AG04449 (cell line): ENCODE measurements at regions of chr1 and their contacts with region 1.

Region 1: GRCh38 chr1:119647734-119648619 is at the start of gene ZNF697:
- DNase-seq: peak; percentile 93
- H3K4me3 ChIP-seq: peak within 1 kb of the TSS; percentile 86
- CTCF ChIP-seq: peak; percentile 50

Region 2: GRCh38 chr1:119662034-119662437 is 14.1 kb after region 1 on chr1:
- CTCF ChIA-PET with region 1: interaction called, 60 read pairs
- POLR2A ChIA-PET with region 1: no interaction called
- DNase-seq: no peak
- H3K4me3 ChIP-seq: no peak overlapping the region
- CTCF ChIP-seq: no peak